Natural killer cell (primary cell): ENCODE measurements at regions of chr1 and their contacts with region 1.

Region 1: GRCh38 chr1:185317034-185317885 is at the start of gene IVNS1ABP:
- DNase-seq: peak; percentile 92 to 97
- ATAC-seq: peak; percentile 70 to 89 (median 76)
- H3K4me3 ChIP-seq: peak within 1 kb of the TSS; percentile 99
- H3K4me3 Mint-ChIP-seq: peak within 1 kb of the TSS; percentile 95
- H3K27ac ChIP-seq: peak within 1 kb of the TSS; percentile 100
- H3K27ac Mint-ChIP-seq: peak within 1 kb of the TSS; percentile 98 to 99
- H3K4me1 ChIP-seq: peaks cover 13% of the 10 kb centered on the region
- H3K4me1 Mint-ChIP-seq: peaks cover 52 to 58% of the 10 kb centered on the region in 2 donors
- H3K27me3 ChIP-seq: no peaks in the 10 kb centered on the region
- H3K27me3 Mint-ChIP-seq: no peaks in the 10 kb centered on the region
- CTCF ChIP-seq: no peak
- total RNA-seq, gene IVNS1ABP: 250 to 394 (median 299) TPM

Region 2: DNA sequence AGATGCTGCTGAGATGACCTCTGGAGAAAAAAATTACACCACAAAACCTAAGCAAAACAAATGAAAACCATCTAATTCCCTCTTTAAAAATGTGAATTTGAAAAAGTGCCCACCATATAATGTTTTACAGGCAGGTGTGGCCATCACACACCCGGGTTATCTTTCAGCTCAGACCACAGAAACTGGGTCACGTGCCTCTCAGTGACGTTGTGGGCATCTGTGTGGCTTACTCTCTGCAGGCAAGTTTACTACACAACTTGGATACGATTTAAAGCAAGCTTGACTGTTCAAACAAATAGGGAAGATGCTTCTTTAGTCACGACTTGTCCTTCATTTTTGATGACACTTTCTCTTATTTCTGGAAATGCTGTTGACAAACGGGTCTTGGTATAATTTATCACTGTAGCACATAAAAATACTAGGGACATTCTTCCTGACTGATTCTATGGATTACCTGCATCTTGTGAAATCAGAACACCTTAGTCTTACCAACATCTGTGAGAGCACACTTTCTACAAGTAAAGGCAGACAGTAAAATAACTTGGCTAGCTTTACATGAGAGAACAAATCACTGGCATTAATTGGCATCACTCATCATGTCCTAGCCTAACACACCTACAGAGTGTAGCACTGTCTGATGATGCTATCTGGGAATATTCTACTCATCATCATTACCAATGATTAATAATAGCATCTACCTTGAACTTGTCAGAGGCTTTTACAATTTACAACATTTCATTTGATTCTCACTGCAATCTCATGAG is 473.3 kb before region 1 on chr1:
- intact Hi-C with region 1: loop called (anchors 10 kb)
- DNase-seq: peak; percentile 66 to 88
- ATAC-seq: peak; percentile 51 to 71 (median 65)
- H3K4me3 ChIP-seq: no peak overlapping the region
- H3K4me3 Mint-ChIP-seq: peak overlapping the region; percentile 54
- H3K27ac ChIP-seq: peak overlapping the region; percentile 61
- H3K27ac Mint-ChIP-seq: peak overlapping the region; percentile 80 to 84
- H3K4me1 ChIP-seq: peaks cover 22% of the 10 kb centered on the region
- H3K4me1 Mint-ChIP-seq: peaks cover 32 to 38% of the 10 kb centered on the region in 2 donors
- H3K27me3 ChIP-seq: no peaks in the 10 kb centered on the region
- H3K27me3 Mint-ChIP-seq: no peaks in the 10 kb centered on the region
- CTCF ChIP-seq: no peak

Region 3: GRCh38 chr1:185156854-185157598 is 160.2 kb before region 1 on chr1 and contains the starts of genes SWT1 and TRMT1L:
- intact Hi-C with region 1: loop called (anchors 2 kb)
- DNase-seq: peak; percentile 96 to 99
- ATAC-seq: peak; percentile 89 to 98 (median 91)
- H3K4me3 ChIP-seq: peak within 1 kb of the TSS; percentile 84
- H3K4me3 Mint-ChIP-seq: peak within 1 kb of the TSS; percentile 100
- H3K27ac ChIP-seq: peak within 1 kb of the TSS; percentile 96
- H3K27ac Mint-ChIP-seq: peak within 1 kb of the TSS; percentile 95 to 99
- H3K4me1 ChIP-seq: peaks cover 12% of the 10 kb centered on the region
- H3K4me1 Mint-ChIP-seq: peaks cover 27 to 37% of the 10 kb centered on the region in 2 donors
- H3K27me3 ChIP-seq: no peaks in the 10 kb centered on the region
- H3K27me3 Mint-ChIP-seq: no peaks in the 10 kb centered on the region
- CTCF ChIP-seq: no peak
- total RNA-seq, gene SWT1: 4.0 to 5.3 (median 5.1) TPM
- total RNA-seq, gene TRMT1L: 4.4 to 8.2 (median 4.9) TPM

Region 4: DNA sequence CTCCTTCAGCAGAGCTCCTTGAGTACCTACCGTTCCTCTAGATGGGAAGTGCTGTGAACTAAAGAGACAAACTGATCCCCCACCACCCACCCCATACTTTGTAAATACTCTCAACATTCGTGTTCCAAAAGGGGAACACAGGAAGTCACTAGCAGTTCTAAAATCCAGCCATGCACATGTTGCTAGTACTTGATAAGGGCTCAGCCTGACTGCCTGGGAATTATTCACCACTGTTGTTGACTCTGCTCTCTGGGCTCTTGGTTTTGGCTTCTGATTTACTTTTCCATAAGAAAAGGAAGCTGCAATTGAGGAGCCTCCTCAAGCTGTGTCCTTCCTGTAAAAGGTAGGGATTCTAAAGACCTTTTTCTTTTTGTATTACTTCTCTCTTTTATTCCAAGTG is 67.7 kb before region 1 on chr1:
- intact Hi-C with region 1: no loop called
- DNase-seq: no peak
- ATAC-seq: no peak
- H3K4me3 ChIP-seq: no peak overlapping the region
- H3K4me3 Mint-ChIP-seq: no peak overlapping the region
- H3K27ac ChIP-seq: no peak overlapping the region
- H3K27ac Mint-ChIP-seq: no peak overlapping the region
- H3K4me1 ChIP-seq: no peaks in the 10 kb centered on the region
- H3K4me1 Mint-ChIP-seq: no peaks in the 10 kb centered on the region
- H3K27me3 ChIP-seq: no peaks in the 10 kb centered on the region
- H3K27me3 Mint-ChIP-seq: no peaks in the 10 kb centered on the region
- CTCF ChIP-seq: no peak

Region 5: GRCh38 chr1:185373813-185374529 is 56.7 kb after region 1 on chr1:
- intact Hi-C with region 1: loop called (anchors 5 kb)
- DNase-seq: peak in 1 of 2 donors; percentile 5
- ATAC-seq: peak; percentile 62 to 65 (median 63)
- H3K4me3 ChIP-seq: no peak overlapping the region
- H3K4me3 Mint-ChIP-seq: peak overlapping the region; percentile 47
- H3K27ac ChIP-seq: peak overlapping the region; percentile 10
- H3K27ac Mint-ChIP-seq: peak overlapping the region in 1 of 2 donors; percentile 76
- H3K4me1 ChIP-seq: peaks cover 21% of the 10 kb centered on the region
- H3K4me1 Mint-ChIP-seq: peaks cover 19 to 26% of the 10 kb centered on the region in 2 donors
- H3K27me3 ChIP-seq: no peaks in the 10 kb centered on the region
- H3K27me3 Mint-ChIP-seq: no peaks in the 10 kb centered on the region
- CTCF ChIP-seq: no peak

Region 6: DNA sequence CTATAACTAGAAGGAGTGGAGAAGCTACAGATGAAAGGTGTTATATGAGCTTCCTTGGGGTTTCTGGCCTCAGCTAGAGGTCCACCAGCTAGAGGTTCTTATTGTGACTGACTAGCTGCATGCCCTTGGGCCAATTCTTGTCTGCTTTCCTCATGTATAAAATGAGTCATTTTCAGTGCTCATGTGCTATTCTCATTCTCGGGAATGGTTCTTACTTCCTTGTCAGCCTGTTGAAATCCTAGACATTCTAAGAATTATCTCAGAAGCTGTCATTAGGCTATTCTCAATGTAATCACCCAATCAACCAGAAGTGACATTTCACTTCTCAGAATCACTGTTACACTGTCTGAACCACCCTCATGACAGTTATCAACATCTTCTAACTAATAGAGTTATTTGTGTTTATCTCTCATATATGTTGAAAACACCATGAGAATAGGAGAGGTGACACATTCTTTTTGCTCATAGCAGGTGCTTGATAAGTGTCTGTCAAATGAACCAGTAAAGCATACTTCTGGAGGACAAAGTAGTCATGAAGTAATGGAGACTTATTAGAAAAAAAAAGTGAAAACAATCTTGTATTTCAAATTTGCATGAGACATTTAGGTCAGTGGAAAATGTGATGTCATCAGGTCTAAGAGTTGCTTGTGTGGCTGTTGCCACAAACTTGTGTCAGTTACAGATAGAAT is 122.6 kb after region 1 on chr1:
- intact Hi-C with region 1: loop called (anchors 1 kb)
- DNase-seq: peak in 1 of 2 donors; percentile 73
- ATAC-seq: peak; percentile 75 to 83 (median 81)
- H3K4me3 ChIP-seq: no peak overlapping the region
- H3K4me3 Mint-ChIP-seq: no peak overlapping the region
- H3K27ac ChIP-seq: peak overlapping the region; percentile 87
- H3K27ac Mint-ChIP-seq: no peak overlapping the region
- H3K4me1 ChIP-seq: peaks cover 38% of the 10 kb centered on the region
- H3K4me1 Mint-ChIP-seq: peaks cover 7 to 9% of the 10 kb centered on the region in 2 donors
- H3K27me3 ChIP-seq: no peaks in the 10 kb centered on the region
- H3K27me3 Mint-ChIP-seq: no peaks in the 10 kb centered on the region
- CTCF ChIP-seq: no peak

Region 7: GRCh38 chr1:186375088-186375953 is 1058.1 kb after region 1 on chr1 and contains the starts of genes ODR4 and TPR:
- intact Hi-C with region 1: loop called (anchors 10 kb)
- DNase-seq: peak; percentile 92 to 98
- ATAC-seq: peak; percentile 77 to 90 (median 81)
- H3K4me3 ChIP-seq: peak within 1 kb of the TSS; percentile 94
- H3K4me3 Mint-ChIP-seq: peak within 1 kb of the TSS; percentile 91
- H3K27ac ChIP-seq: peak within 1 kb of the TSS; percentile 94
- H3K27ac Mint-ChIP-seq: peak within 1 kb of the TSS; percentile 90
- H3K4me1 ChIP-seq: peaks cover 10% of the 10 kb centered on the region
- H3K4me1 Mint-ChIP-seq: peaks cover 33 to 37% of the 10 kb centered on the region in 2 donors
- H3K27me3 ChIP-seq: no peaks in the 10 kb centered on the region
- H3K27me3 Mint-ChIP-seq: no peaks in the 10 kb centered on the region
- CTCF ChIP-seq: peak; percentile 85
- total RNA-seq, gene ODR4: 20.3 to 24.4 (median 21.0) TPM
- total RNA-seq, gene TPR: 96.8 to 137 (median 116) TPM